Activated CD4-positive, alpha-beta T cell treated with anti-CD3 and anti-CD28 coated beads for 36 hours (primary cell): ENCODE measurements at regions of chr4 and their contacts with region 1.

Region 1: DNA sequence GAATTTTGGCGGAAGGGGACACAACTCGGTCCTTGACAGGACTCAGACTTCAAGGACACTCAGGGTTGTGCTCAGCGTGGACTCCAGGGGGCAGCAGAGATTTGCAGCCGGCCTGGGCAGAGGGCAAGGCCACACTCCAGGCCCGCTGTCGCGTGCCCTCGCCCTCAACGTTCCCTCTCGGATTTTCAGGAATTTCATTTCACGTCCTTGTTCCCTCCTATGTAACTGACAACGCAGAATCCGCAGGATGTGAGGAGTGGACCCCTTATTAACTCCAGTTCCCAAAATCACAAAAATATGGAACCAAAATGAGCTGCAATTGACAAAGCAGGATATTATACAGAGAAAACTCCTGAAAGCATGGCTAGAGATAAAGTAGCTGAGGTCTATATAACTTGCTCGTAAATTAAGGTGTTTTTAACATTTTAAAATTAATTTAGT is 21.0 kb upstream of the DCTD start:
- DNase-seq: peak; percentile 83
- ATAC-seq: peak; percentile 98
- H3K4me3 Mint-ChIP-seq: no peak overlapping the region
- H3K27ac Mint-ChIP-seq: no peak overlapping the region
- H3K4me1 Mint-ChIP-seq: peaks cover 2% of the 10 kb centered on the region
- H3K27me3 Mint-ChIP-seq: peaks cover 7% of the 10 kb centered on the region

Region 2: DNA sequence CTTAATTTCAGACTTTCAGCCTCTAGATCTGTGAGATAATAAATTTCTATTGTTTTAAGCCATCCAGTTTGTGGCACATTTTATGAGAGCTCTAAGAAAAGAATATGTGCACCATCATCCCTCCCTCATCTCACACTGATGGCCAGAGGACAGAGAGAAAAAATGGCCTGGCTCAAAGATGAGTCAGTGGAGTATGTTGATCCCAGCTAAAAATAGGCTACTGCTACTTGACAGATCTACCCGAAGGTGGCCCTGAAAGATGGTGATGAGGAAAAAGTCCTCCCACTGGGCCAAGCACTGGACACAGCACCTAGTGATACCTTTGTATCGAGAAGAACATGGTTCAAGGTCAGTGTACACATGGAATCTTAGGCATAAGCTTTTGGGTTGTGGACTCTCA is 17.2 kb after region 1 on chr4:
- CTCF ChIA-PET with region 1: interaction called, 15 read pairs
- POLR2A ChIA-PET with region 1: no interaction called
- intact Hi-C with region 1: no loop called
- DNase-seq: no peak
- ATAC-seq: no peak
- H3K4me3 Mint-ChIP-seq: no peak overlapping the region
- H3K27ac Mint-ChIP-seq: no peak overlapping the region
- H3K4me1 Mint-ChIP-seq: no peaks in the 10 kb centered on the region
- H3K27me3 Mint-ChIP-seq: no peaks in the 10 kb centered on the region

Region 3: DNA sequence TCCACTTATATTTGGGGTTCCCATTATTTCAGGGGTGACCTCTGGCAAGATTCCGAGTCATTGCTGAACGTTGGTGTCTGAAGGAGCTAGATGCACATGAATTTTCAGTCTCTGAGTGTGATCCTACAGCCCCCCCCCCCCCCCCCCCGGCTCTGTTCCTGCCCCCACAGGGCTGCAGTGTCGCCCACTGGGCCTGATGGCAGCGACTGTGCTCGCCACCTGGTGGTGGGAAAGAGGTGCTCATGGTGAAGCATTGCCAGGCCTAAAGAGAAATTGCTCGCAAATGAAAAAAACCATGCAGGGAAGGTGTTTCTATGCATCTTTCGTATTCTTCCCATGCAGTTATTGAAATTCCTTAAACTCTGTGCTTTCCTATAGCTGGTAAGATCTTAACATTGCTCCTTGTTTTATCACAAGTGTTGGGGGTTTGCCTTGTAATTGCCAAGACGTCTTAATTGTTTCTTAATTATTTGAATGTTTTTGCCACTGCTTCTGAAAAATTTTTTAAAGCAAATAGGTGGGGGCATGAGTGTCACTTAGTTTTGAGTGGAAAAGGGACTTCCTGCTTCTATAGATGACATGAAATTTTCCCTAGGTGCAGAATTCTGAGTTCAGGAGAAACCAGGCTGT is 318.6 kb after region 1 on chr4:
- CTCF ChIA-PET with region 1: interaction called, 56 read pairs
- POLR2A ChIA-PET with region 1: no interaction called
- intact Hi-C with region 1: loop called (anchors 1 kb)
- DNase-seq: peak; percentile 67
- ATAC-seq: peak; percentile 53
- H3K4me3 Mint-ChIP-seq: no peak overlapping the region
- H3K27ac Mint-ChIP-seq: no peak overlapping the region
- H3K4me1 Mint-ChIP-seq: no peaks in the 10 kb centered on the region
- H3K27me3 Mint-ChIP-seq: no peaks in the 10 kb centered on the region